Dorsolateral prefrontal cortex (tissue), 120 donors: ENCODE measurements at regions of chr11 and their contacts with region 1.

Region 1: DNA sequence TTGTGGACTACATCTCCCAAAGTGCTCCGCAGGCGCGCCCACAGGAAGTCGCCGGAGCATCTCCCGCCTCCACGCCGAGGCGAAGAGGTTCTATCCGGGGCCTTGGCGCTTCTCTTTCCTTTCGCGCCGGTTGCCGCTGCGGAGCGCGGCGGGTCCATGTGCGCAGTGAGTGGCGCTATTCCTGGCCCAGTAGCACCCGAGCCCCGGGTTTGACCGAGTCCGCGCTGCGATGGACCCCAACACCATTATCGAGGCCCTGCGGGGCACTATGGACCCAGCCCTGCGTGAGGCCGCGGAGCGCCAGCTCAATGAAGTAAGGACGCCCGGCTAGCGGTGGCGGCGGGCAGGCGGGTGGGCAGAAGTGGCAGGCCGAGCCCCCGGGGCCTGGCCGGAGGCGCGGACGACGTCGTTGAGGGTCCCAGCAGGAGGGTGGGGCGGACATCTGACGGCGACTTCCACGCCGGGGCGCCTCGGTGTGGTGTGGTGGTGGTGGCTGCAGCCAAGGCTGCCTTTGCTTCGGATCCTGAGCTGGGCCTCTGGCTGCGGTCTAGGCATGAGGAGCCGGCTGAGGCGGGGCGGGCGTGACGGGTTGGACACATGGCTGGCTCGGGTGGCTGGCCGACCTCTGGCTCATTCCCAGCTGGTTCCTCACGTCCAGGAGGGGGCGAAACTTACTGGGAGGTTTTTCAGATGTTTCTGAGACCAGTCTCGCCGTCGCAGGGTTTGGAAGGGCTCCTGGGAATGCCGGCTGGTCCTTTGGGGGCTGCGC is at the start of gene IPO7:
- DNase-seq: peak; percentile 85 to 96 (median 94)
- H3K4me3 ChIP-seq: peak within 1 kb of the TSS; percentile 63 to 98 (median 91)
- H3K27ac ChIP-seq: peak within 1 kb of the TSS in 57 of 59 donors; percentile 12 to 93 (median 81)
- H3K27me3 ChIP-seq: no peaks in the 10 kb centered on the region
- CTCF ChIP-seq: peak in 41 of 56 donors; percentile 2 to 57 (median 26)
- total RNA-seq, gene IPO7: 60.4 to 142 (median 98.8) TPM

Region 2: DNA sequence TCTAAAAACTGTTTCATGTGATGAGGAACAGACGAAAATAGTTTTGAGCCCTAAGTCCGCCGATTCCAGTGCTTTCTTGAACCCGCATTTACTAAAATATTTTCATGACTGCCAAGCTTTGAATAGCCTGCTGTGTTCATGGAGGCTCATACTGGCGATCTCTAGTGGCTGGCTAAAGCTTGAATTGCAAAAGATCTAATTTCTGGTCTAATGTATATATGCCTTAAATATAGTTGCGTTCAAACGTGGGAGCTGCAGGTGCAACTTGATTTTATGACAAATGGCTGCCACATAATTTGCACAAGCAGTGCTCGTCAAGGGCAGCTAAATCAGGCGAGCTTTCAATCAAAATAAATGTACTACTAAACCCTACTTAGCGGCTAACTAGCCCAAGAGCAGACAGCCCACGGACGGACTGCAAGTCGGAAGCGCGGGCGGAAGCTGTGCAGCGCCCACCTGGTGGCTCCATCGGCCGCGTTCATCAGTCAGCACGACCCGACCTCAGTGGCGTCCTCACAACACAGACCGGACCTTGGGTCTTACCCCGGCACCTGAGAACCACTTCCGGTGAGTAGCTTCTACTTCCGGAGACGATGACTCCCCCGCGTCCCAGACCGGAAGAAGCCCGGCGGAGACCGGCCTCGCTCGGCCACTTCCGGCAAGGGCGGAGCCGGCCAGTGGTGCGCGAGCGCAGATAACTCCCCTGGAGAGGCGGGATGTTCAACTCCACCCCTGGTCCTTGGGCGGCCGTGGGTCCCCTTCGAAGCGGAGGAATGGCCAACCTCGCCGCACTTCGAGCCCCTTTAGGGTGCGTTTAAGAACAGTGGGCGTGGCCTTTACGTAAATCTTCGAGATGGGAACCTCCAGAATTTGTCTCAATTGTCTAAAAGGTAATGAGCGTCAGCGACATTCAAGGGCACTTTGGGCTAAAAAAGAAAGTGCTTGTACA is 696.0 kb before region 1 on chr11:
- intact Hi-C with region 1: loop called in 1 of 2 experiments (anchors 10 kb)
- DNase-seq: peak; percentile 92 to 96 (median 94)
- H3K4me3 ChIP-seq: peak overlapping the region; percentile 57 to 96 (median 74)
- H3K27ac ChIP-seq: peak overlapping the region; percentile 17 to 96 (median 85)
- H3K27me3 ChIP-seq: no peaks in the 10 kb centered on the region
- CTCF ChIP-seq: peak in 52 of 56 donors; percentile 19 to 68 (median 47)

Region 3: GRCh38 chr11:9144830-9145229 is 239.9 kb before region 1 on chr11:
- intact Hi-C with region 1: loop called in 1 of 2 experiments (anchors 10 kb)
- DNase-seq: peak in 1 of 10 donors; percentile 71
- H3K4me3 ChIP-seq: no peak overlapping the region
- H3K27ac ChIP-seq: peak overlapping the region in 45 of 59 donors; percentile 0 to 93 (median 77)
- H3K27me3 ChIP-seq: no peaks in the 10 kb centered on the region
- CTCF ChIP-seq: no peak

Region 4: GRCh38 chr11:9314291-9315036 is 70.3 kb before region 1 on chr11 and contains the start of gene TMEM41B:
- intact Hi-C with region 1: loop called (anchors 2 to 5 kb)
- DNase-seq: peak; percentile 91 to 99 (median 96)
- H3K4me3 ChIP-seq: peak within 1 kb of the TSS; percentile 67 to 100 (median 95)
- H3K27ac ChIP-seq: peak within 1 kb of the TSS; percentile 44 to 97 (median 90)
- H3K27me3 ChIP-seq: peaks cover 0 to 11% (median 0%) of the 10 kb centered on the region in 45 donors
- CTCF ChIP-seq: peak in 51 of 56 donors; percentile 1 to 67 (median 41)
- total RNA-seq, gene TMEM41B: 31.7 to 63.9 (median 42.1) TPM

Region 5: GRCh38 chr11:9460322-9461067 is 75.8 kb after region 1 on chr11 and contains the start of gene ZNF143:
- intact Hi-C with region 1: loop called (anchors 2 to 5 kb)
- DNase-seq: peak; percentile 99 to 100 (median 100)
- H3K4me3 ChIP-seq: peak within 1 kb of the TSS; percentile 73 to 100 (median 94)
- H3K27ac ChIP-seq: peak within 1 kb of the TSS; percentile 96 to 100 (median 100)
- H3K27me3 ChIP-seq: no peaks in the 10 kb centered on the region
- CTCF ChIP-seq: peak in 11 of 56 donors; percentile 3 to 34 (median 18)
- total RNA-seq, gene ZNF143: 12.5 to 37.0 (median 22.4) TPM